ENCODE measurements at regions of chr15 and their contacts with region 1.

Region 1: GRCh38 chr15:65757256-65757655 is 34.8 kb downstream of the DENND4A start:
- DNase-seq: no peak
- ATAC-seq: no peak
- H3K4me3 ChIP-seq: no peak overlapping the region
- H3K4me3 Mint-ChIP-seq: no peak overlapping the region
- H3K27ac ChIP-seq: no peak overlapping the region
- H3K27ac Mint-ChIP-seq: no peak overlapping the region
- H3K4me1 ChIP-seq: peaks cover 5% of the 10 kb centered on the region
- H3K4me1 Mint-ChIP-seq: peaks cover 33% of the 10 kb centered on the region
- H3K27me3 ChIP-seq: no peaks in the 10 kb centered on the region
- H3K27me3 Mint-ChIP-seq: no peaks in the 10 kb centered on the region
- CTCF ChIP-seq: no peak

Region 2: GRCh38 chr15:64667736-64668161 is 1089.5 kb before region 1 on chr15:
- CTCF ChIA-PET with region 1: no interaction called
- POLR2A ChIA-PET with region 1: no interaction called
- intact Hi-C with region 1: no loop called
- DNase-seq: no peak
- ATAC-seq: no peak
- H3K4me3 ChIP-seq: no peak overlapping the region
- H3K4me3 Mint-ChIP-seq: no peak overlapping the region
- H3K27ac ChIP-seq: no peak overlapping the region
- H3K27ac Mint-ChIP-seq: peak overlapping the region; percentile 8
- H3K4me1 ChIP-seq: no peaks in the 10 kb centered on the region
- H3K4me1 Mint-ChIP-seq: peaks cover 13% of the 10 kb centered on the region
- H3K27me3 ChIP-seq: no peaks in the 10 kb centered on the region
- H3K27me3 Mint-ChIP-seq: no peaks in the 10 kb centered on the region
- CTCF ChIP-seq: no peak

Region 3: GRCh38 chr15:65777053-65777452 is 19.8 kb after region 1 on chr15:
- CTCF ChIA-PET with region 1: no interaction called
- POLR2A ChIA-PET with region 1: no interaction called
- intact Hi-C with region 1: loop called in 1 of 2 experiments (anchors 2 kb)
- DNase-seq: no peak
- ATAC-seq: no peak
- H3K4me3 ChIP-seq: no peak overlapping the region
- H3K4me3 Mint-ChIP-seq: no peak overlapping the region
- H3K27ac ChIP-seq: no peak overlapping the region
- H3K27ac Mint-ChIP-seq: no peak overlapping the region
- H3K4me1 ChIP-seq: peaks cover 38% of the 10 kb centered on the region
- H3K4me1 Mint-ChIP-seq: peaks cover 45% of the 10 kb centered on the region
- H3K27me3 ChIP-seq: no peaks in the 10 kb centered on the region
- H3K27me3 Mint-ChIP-seq: no peaks in the 10 kb centered on the region
- CTCF ChIP-seq: no peak

Region 4: GRCh38 chr15:65818927-65819562 is 61.8 kb after region 1 on chr15:
- CTCF ChIA-PET with region 1: no interaction called
- POLR2A ChIA-PET with region 1: no interaction called
- intact Hi-C with region 1: no loop called
- DNase-seq: peak in 2 of 9 experiments; percentile 86 to 94
- ATAC-seq: peak; percentile 90
- H3K4me3 ChIP-seq: peak overlapping the region in 1 of 2 experiments; percentile 2
- H3K4me3 Mint-ChIP-seq: peak overlapping the region; percentile 59
- H3K27ac ChIP-seq: peak overlapping the region; percentile 84 to 88
- H3K27ac Mint-ChIP-seq: peak overlapping the region; percentile 92
- H3K4me1 ChIP-seq: peaks cover 39% of the 10 kb centered on the region
- H3K4me1 Mint-ChIP-seq: peaks cover 49% of the 10 kb centered on the region
- H3K27me3 ChIP-seq: no peaks in the 10 kb centered on the region
- H3K27me3 Mint-ChIP-seq: no peaks in the 10 kb centered on the region
- CTCF ChIP-seq: no peak